Activated CD8-positive, alpha-beta T cell treated with anti-CD3 and anti-CD28 coated beads for 36 hours (primary cell): ENCODE measurements at regions of chr12 and their contacts with region 1.

Region 1: DNA sequence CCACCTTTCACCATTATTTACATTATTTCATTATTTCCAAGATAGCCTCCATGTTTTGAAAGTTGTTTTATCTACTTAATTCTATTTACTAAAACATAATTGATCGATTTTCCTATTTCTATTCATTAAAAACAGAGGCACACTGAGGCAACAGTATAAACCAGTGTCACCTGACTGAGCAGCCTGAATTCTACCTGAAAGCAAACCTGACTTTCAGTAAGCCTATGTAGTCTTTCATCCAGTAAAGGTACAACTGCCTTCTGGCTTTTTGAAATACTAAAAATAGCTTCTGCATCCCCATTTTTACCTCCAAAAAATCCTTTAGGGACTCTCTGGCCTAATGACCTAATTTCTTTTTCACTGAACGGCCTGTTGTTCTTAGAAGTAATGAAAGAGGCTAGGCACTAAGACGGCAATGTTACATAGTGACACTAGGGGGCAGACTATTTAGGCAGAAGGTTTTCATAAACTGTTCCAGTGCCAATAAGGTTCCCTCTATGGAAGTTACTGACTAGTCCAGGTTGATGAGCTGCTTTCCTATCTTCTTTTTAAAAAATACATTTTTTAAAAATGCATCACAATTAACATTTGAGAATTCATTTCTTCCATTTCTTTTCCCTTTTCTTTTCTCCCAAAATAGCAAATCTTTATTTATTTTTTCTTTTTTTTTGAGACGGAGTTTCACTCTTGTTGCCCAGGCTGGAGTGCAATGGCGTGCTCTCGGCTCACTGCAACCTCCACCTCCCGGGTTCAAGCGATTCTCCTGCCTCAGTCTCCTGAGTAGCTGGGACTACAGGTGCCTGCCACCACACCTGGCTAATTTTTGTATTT is 17.5 kb downstream of the ANAPC5 start:
- DNase-seq: peak; percentile 8
- ATAC-seq: peak; percentile 88
- H3K4me3 Mint-ChIP-seq: no peak overlapping the region
- H3K27ac Mint-ChIP-seq: no peak overlapping the region
- H3K4me1 Mint-ChIP-seq: peaks cover 3% of the 10 kb centered on the region
- H3K27me3 Mint-ChIP-seq: no peaks in the 10 kb centered on the region
- CTCF ChIP-seq: peak; percentile 86

Region 2: DNA sequence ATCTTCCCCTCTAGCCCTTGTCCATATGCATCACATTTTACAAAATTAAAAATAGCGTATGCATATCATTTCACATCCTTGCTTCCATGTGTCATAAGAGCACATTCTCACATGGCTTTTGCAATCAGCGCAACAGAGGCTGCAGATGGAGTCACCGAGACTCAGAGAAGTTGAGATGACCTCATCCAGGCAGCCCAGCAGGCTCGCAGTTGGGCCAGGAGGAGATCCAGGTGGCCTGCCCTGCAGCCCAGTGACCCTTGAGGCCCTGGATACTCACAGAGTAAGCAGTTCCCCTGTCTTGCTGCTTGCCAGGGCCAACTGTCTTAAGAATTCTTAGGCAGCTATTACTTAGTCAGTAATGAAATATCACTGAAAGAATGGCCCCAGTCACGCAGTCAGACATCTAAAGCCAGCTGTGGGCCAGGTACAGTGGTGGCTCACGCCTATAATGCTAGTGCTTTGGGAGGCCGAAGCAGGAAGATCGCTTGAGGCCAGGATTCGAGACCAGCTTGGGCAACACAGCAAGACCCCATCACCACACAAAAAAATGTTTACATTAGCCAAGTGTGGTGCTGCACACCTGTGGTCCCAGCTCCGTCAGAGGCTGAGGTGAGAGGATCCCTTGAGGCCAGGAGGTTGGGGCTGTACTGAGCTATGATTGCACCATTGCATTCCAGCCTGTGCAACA is 47.3 kb before region 1 on chr12:
- CTCF ChIA-PET with region 1: no interaction called
- POLR2A ChIA-PET with region 1: no interaction called
- intact Hi-C with region 1: no loop called
- DNase-seq: no peak
- ATAC-seq: no peak
- H3K4me3 Mint-ChIP-seq: no peak overlapping the region
- H3K27ac Mint-ChIP-seq: no peak overlapping the region
- H3K4me1 Mint-ChIP-seq: peaks cover 7% of the 10 kb centered on the region
- H3K27me3 Mint-ChIP-seq: no peaks in the 10 kb centered on the region
- CTCF ChIP-seq: no peak

Region 3: DNA sequence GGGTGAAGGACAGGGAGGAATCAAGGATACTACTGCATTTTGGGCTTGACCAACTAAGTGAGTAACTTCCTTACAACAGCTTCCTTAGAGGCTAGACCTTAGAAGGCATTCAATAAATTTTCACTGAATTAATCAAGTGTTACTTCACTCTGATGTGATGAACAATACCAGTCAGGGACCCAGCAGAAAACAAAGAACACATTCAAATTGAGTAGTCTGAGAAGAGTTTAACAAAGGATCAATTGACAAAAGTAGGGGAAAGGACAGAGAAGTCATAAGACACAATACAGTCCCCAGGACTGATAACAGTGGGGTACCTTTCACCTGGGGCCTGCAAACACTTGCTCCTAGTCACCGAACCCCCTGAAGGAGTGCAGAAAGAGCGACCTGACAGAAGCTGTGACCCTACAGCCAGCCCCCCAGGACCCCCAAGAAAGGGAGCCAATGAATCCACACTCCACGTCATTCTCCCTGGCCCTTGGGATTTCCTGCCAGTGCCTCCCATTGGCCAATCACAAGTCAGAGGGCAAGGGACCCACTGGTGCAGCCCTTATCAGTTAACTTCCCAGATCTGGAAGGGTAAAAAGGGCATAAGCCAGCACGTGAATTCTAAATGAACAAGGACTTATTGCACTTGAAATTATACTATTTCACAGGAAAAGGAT is 10.6 kb after region 1 on chr12:
- CTCF ChIA-PET with region 1: interaction called, 19 read pairs
- POLR2A ChIA-PET with region 1: interaction called, 5 read pairs
- intact Hi-C with region 1: no loop called
- DNase-seq: no peak
- ATAC-seq: no peak
- H3K4me3 Mint-ChIP-seq: no peak overlapping the region
- H3K27ac Mint-ChIP-seq: peak overlapping the region; percentile 22
- H3K4me1 Mint-ChIP-seq: peaks cover 16% of the 10 kb centered on the region
- H3K27me3 Mint-ChIP-seq: no peaks in the 10 kb centered on the region
- CTCF ChIP-seq: no peak

Region 4: GRCh38 chr12:121351820-121352681 is 17.3 kb after region 1 on chr12 and contains the start of gene ANAPC5:
- CTCF ChIA-PET with region 1: interaction called, 19 read pairs
- POLR2A ChIA-PET with region 1: interaction called, 7 read pairs
- intact Hi-C with region 1: no loop called
- DNase-seq: peak; percentile 95
- ATAC-seq: peak; percentile 98
- H3K4me3 Mint-ChIP-seq: peak within 1 kb of the TSS; percentile 93
- H3K27ac Mint-ChIP-seq: peak within 1 kb of the TSS; percentile 99
- H3K4me1 Mint-ChIP-seq: peaks cover 24% of the 10 kb centered on the region
- H3K27me3 Mint-ChIP-seq: no peaks in the 10 kb centered on the region
- CTCF ChIP-seq: no peak
- total RNA-seq, gene ANAPC5: 122 TPM

Region 5: DNA sequence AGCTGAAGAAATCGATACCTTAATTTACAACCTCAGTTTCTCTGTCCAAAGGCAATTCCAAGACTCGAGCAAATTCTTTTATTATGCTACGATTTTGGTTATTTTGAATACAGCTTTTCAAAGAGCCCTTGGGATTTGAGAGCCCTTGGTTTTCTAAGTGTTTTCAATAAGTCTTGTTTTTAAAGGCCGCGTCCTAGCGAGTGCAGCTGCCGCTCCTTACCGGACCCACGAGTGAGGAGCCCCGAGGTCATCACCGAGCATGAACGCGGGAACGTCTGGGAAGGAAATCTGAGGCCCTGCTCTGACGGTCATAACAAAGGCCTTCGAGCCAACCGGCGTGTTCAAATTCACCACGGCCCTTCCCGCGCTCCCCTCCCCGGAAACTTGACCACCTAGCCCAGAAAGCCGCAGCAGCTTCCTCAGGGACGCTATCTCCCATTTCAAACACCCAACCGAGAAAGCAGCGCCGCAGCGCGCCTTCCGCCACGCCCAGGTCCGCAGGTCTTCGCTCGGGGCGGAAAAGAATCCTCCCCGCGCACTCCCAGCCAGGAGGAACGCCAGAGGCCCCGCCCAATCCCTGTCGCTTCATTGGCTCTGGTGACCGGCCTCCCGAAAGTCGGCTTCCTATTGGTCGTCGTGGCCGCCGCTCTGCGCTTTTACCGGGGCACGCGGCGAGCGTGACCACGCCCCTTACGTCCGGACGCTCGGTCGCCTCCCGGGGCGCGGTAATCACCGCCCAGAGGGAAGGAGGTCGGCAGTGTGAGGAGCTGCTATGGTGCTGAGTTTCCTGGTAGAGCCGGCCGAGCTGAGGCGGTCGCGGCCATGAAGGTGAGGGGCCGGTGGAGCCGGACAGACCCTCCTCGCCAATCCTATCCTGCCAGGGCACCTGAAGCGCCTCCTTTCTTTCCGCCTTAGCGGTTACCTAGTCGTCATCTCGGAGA is 64.9 kb after region 1 on chr12 and contains the start of gene RNF34:
- CTCF ChIA-PET with region 1: interaction called, 27 read pairs
- POLR2A ChIA-PET with region 1: interaction called, 18 read pairs
- intact Hi-C with region 1: loop called (anchors 5 kb)
- DNase-seq: peak; percentile 99
- ATAC-seq: peak; percentile 92
- H3K4me3 Mint-ChIP-seq: peak within 1 kb of the TSS; percentile 85
- H3K27ac Mint-ChIP-seq: peak within 1 kb of the TSS; percentile 93
- H3K4me1 Mint-ChIP-seq: peaks cover 26% of the 10 kb centered on the region
- H3K27me3 Mint-ChIP-seq: no peaks in the 10 kb centered on the region
- CTCF ChIP-seq: no peak
- total RNA-seq, gene RNF34: 44.1 to 44.9 TPM

Region 6: GRCh38 chr12:121417847-121418246 is 83.1 kb after region 1 on chr12:
- CTCF ChIA-PET with region 1: interaction called, 12 read pairs
- POLR2A ChIA-PET with region 1: no interaction called
- intact Hi-C with region 1: no loop called
- DNase-seq: no peak
- ATAC-seq: no peak
- H3K4me3 Mint-ChIP-seq: no peak overlapping the region
- H3K27ac Mint-ChIP-seq: no peak overlapping the region
- H3K4me1 Mint-ChIP-seq: peaks cover 17% of the 10 kb centered on the region
- H3K27me3 Mint-ChIP-seq: no peaks in the 10 kb centered on the region
- CTCF ChIP-seq: no peak

Region 7: DNA sequence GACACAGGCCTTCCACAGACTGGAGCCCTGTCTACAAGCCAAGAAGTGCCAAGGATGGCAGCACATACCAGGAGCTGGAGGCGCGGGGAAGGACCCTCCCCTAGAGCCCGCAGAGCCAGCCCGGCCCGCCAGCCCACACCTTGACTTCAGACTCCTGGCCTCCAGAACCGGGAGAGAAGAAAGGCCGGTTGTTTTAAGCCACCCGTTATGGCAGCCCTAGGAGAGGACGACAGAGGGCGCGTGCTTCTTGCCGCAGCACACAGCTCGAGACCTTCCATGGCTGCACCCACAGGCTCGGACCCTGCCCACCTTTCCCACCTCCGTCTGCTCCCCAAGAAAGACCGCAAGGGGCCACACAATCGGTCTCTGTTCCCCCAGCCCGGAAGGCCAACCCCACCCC is 118.9 kb after region 1 on chr12:
- CTCF ChIA-PET with region 1: interaction called, 15 read pairs
- POLR2A ChIA-PET with region 1: no interaction called
- intact Hi-C with region 1: loop called (anchors 10 kb)
- DNase-seq: no peak
- ATAC-seq: no peak
- H3K4me3 Mint-ChIP-seq: no peak overlapping the region
- H3K27ac Mint-ChIP-seq: no peak overlapping the region
- H3K4me1 Mint-ChIP-seq: peaks cover 37% of the 10 kb centered on the region
- H3K27me3 Mint-ChIP-seq: no peaks in the 10 kb centered on the region
- CTCF ChIP-seq: no peak